K562 (cell line): ENCODE measurements at regions of chr13 and their contacts with region 1.

Region 1: GRCh38 chr13:52450012-52450792 is at the start of gene VPS36:
- DNase-seq: peak; percentile 78 to 95 (median 84)
- ATAC-seq: peak; percentile 87
- H3K4me3 ChIP-seq: peak within 1 kb of the TSS; percentile 87
- H3K27ac ChIP-seq: peak within 1 kb of the TSS; percentile 93
- H3K4me1 ChIP-seq: peaks cover 0 to 9% of the 10 kb centered on the region in 2 experiments; a peak in 4 of 5 replicates
- H3K27me3 ChIP-seq: no peaks in the 10 kb centered on the region
- CTCF ChIP-seq: peak; percentile 94 to 97 (median 95)
- EP300 ChIP-seq: no peak; the same call in 1 of the 2 replicates
- POLR2A ChIP-seq: peak; percentile 81
- RAD21 ChIP-seq: peak; percentile 81 to 85
- polyA plus RNA-seq, gene VPS36: 8.4 to 12.2 TPM

Region 2: GRCh38 chr13:51978796-51979556 is 471.2 kb before region 1 on chr13:
- CTCF ChIA-PET with region 1: no interaction called
- POLR2A ChIA-PET with region 1: no interaction called
- in situ Hi-C with region 1: no loop called
- intact Hi-C with region 1: no loop called
- DNase-seq: peak; percentile 65 to 80 (median 71)
- ATAC-seq: peak; percentile 92
- H3K4me3 ChIP-seq: peak overlapping the region; percentile 4; the same call in 1 of the 2 replicates
- H3K27ac ChIP-seq: peak overlapping the region; percentile 67
- H3K4me1 ChIP-seq: peaks cover 13 to 42% of the 10 kb centered on the region in 2 experiments
- H3K27me3 ChIP-seq: no peaks in the 10 kb centered on the region
- CTCF ChIP-seq: no peak
- EP300 ChIP-seq: no peak
- POLR2A ChIP-seq: peak; percentile 58; the same call in 1 of the 2 replicates
- RAD21 ChIP-seq: no peak

Region 3: GRCh38 chr13:51995677-51996551 is 454.3 kb before region 1 on chr13:
- CTCF ChIA-PET with region 1: no interaction called
- POLR2A ChIA-PET with region 1: no interaction called
- in situ Hi-C with region 1: no loop called
- intact Hi-C with region 1: loop called (anchors 10 kb)
- DNase-seq: peak; percentile 33 to 51 (median 38)
- ATAC-seq: peak; percentile 50
- H3K4me3 ChIP-seq: peak overlapping the region; percentile 29; the same call in 1 of the 2 replicates
- H3K27ac ChIP-seq: peak overlapping the region; percentile 72
- H3K4me1 ChIP-seq: peaks cover 44 to 59% of the 10 kb centered on the region in 2 experiments
- H3K27me3 ChIP-seq: no peaks in the 10 kb centered on the region
- CTCF ChIP-seq: peak; percentile 9 to 33 (median 31); a peak in 3 of 6 replicates
- EP300 ChIP-seq: no peak
- POLR2A ChIP-seq: no peak
- RAD21 ChIP-seq: no peak

Region 4: DNA sequence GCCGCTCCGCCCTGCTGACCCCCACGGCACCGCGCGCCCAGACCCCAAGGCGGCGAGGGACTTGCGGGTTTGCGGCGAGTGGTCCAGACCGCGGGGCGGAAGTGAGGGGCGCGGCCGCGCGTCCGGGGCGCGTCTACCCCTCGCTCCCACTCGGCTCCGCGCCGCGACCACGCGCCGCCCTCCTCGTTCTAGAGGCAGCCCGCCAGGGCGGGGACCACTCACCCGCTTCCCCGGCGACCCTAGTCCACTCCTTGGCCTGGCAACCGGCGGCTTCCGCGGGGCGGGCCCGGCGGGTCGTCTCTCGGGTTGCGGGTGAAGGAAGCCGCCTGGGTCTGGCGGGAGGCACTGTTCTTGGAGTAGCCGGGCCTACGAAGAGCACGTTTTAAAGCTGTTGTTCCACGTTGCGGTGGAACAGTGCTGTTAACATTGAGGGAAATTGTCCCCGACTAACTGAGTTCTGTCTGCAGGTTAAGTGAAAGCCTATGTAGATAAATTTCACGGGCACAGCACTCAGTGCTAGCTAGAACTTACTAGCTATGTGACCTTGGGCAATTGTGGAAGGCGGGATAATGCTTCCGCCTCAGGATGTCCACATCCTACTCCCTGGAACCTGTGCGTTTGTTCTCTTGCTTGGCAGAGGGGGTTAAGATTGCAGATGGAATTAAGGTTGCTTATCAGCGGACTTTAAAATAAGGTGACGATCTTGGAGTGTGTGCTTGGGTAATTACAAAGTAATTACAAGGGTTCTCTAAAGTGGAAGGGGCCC is 290.7 kb before region 1 on chr13 and contains the start of gene NEK3:
- CTCF ChIA-PET with region 1: no interaction called
- POLR2A ChIA-PET with region 1: no interaction called
- in situ Hi-C with region 1: no loop called
- intact Hi-C with region 1: loop called (anchors 10 kb)
- DNase-seq: peak; percentile 64 to 65 (median 64)
- ATAC-seq: peak; percentile 96
- H3K4me3 ChIP-seq: peak within 1 kb of the TSS; percentile 68
- H3K27ac ChIP-seq: peak within 1 kb of the TSS; percentile 58; the same call in 1 of the 3 replicates
- H3K4me1 ChIP-seq: peaks cover 8 to 10% of the 10 kb centered on the region in 2 experiments; a peak in 4 of 5 replicates
- H3K27me3 ChIP-seq: no peaks in the 10 kb centered on the region
- CTCF ChIP-seq: no peak
- EP300 ChIP-seq: no peak
- POLR2A ChIP-seq: peak; percentile 54; the same call in 1 of the 2 replicates
- RAD21 ChIP-seq: no peak
- polyA plus RNA-seq, gene NEK3: 9.3 to 11.0 TPM

Region 5: GRCh38 chr13:52345631-52346274 is 104.4 kb before region 1 on chr13:
- CTCF ChIA-PET with region 1: no interaction called
- POLR2A ChIA-PET with region 1: interaction called, 7 read pairs
- in situ Hi-C with region 1: no loop called
- intact Hi-C with region 1: loop called (anchors 2 kb)
- DNase-seq: no peak
- ATAC-seq: no peak
- H3K4me3 ChIP-seq: no peak overlapping the region
- H3K27ac ChIP-seq: no peak overlapping the region
- H3K4me1 ChIP-seq: no peaks in the 10 kb centered on the region
- H3K27me3 ChIP-seq: no peaks in the 10 kb centered on the region
- CTCF ChIP-seq: no peak
- EP300 ChIP-seq: no peak
- POLR2A ChIP-seq: no peak
- RAD21 ChIP-seq: no peak

Region 6: DNA sequence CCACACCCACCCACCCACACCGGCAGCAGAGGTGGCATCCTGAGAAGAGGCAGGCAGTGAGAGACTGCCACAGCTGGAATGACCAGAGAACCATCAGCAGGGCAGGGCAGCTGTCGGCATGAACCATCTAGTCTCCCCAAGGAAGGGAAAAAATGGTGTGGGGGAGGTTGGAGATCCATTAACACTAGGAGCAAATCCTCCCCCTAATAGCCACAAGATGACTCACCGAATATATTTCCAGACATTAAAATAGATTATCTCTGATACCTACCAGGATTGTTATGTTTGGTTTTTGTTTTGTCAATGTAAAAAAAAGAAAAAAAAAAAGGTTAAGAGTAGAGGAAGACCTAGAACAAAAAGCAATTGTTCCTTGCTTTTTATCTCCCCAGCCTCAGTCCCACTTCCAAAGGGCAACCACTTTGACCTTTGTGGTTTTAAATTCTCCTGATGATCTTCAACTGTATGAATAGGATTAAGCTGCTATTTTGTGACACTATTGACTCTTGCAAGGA is 78.4 kb before region 1 on chr13:
- CTCF ChIA-PET with region 1: no interaction called
- POLR2A ChIA-PET with region 1: no interaction called
- in situ Hi-C with region 1: no loop called
- intact Hi-C with region 1: no loop called
- DNase-seq: no peak
- ATAC-seq: no peak
- H3K4me3 ChIP-seq: no peak overlapping the region
- H3K27ac ChIP-seq: no peak overlapping the region
- H3K4me1 ChIP-seq: no peaks in the 10 kb centered on the region; a peak in 1 of 5 replicates
- H3K27me3 ChIP-seq: peaks cover 0 to 5% of the 10 kb centered on the region in 2 experiments; a peak in 1 of 5 replicates
- CTCF ChIP-seq: no peak
- EP300 ChIP-seq: no peak
- POLR2A ChIP-seq: no peak
- RAD21 ChIP-seq: no peak

Region 7: DNA sequence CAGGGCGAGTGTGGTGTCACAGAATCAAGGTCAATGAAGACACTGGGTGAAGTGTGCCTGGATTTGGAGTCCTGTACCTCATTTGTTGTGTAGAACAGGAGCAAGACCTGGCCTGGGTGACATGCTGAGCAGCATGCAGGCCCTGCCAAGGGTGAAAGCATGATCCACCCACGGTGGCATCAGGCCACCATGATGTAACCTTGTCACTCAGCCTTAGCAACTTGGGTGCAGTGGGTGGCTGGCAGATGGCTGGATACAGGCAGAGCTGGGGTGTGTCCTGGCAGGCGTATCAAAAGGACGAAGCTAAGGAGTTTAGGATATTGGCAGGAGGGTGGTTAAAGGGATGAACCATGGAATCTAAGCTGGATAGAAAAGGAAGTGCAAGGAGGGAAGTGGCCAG is 54.5 kb before region 1 on chr13:
- CTCF ChIA-PET with region 1: no interaction called
- POLR2A ChIA-PET with region 1: no interaction called
- in situ Hi-C with region 1: no loop called
- intact Hi-C with region 1: no loop called
- DNase-seq: no peak
- ATAC-seq: no peak
- H3K4me3 ChIP-seq: no peak overlapping the region
- H3K27ac ChIP-seq: no peak overlapping the region
- H3K4me1 ChIP-seq: no peaks in the 10 kb centered on the region
- H3K27me3 ChIP-seq: peaks cover 6 to 19% of the 10 kb centered on the region in 2 experiments; a peak in 4 of 5 replicates
- CTCF ChIP-seq: no peak
- EP300 ChIP-seq: no peak
- POLR2A ChIP-seq: no peak
- RAD21 ChIP-seq: no peak

Region 8: DNA sequence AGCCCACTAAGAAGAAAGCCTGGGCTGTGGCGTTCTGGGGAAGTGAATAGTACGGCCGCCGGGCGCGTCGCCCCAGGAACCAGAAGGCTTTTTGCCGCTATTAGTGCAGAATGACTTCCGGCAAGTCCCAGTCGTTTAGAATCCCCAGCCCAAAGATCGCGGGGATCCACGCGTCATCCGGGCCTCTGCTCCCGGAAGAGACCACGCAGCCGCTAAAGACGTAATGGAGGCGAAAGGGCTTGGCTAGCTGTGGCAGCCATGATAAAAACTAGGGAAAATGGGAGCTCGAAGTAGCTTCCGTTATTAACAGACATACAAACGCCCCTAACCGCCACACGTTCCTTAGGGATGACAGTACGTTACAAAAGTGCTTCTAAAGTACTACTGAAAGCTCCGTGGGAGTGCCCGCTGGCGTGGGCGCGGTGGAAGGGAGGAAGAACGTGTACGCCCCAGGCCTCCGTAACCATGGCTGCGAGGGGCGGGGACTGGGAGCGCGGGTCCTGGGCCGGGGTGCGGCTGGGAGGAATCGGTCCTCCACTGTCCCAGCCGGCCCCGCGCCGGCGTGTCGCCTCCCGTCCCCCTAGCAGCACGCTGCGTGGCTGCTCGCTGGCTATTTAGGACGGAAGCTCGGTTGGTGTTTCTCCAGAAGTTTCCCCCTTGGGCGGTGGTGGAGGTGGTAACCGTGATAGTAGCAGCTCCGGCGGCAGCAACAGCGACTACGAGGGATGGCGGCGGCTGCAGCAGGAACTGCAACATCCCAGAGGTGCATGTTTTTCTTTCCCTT is 202.2 kb after region 1 on chr13 and contains the start of gene SUGT1:
- CTCF ChIA-PET with region 1: no interaction called
- POLR2A ChIA-PET with region 1: no interaction called
- in situ Hi-C with region 1: no loop called
- intact Hi-C with region 1: loop called (anchors 10 kb)
- DNase-seq: peak; percentile 79 to 95 (median 82)
- ATAC-seq: peak; percentile 96
- H3K4me3 ChIP-seq: peak within 1 kb of the TSS; percentile 66
- H3K27ac ChIP-seq: peak within 1 kb of the TSS; percentile 92
- H3K4me1 ChIP-seq: peaks cover 0 to 5% of the 10 kb centered on the region in 2 experiments; a peak in 1 of 5 replicates
- H3K27me3 ChIP-seq: no peaks in the 10 kb centered on the region
- CTCF ChIP-seq: peak; percentile 58 to 75 (median 70)
- EP300 ChIP-seq: no peak
- POLR2A ChIP-seq: peak; percentile 82
- RAD21 ChIP-seq: peak; percentile 5 to 18; a peak in 1 of 4 replicates
- polyA plus RNA-seq, gene SUGT1: 59.0 to 60.4 TPM